Activated CD8-positive, alpha-beta T cell treated with anti-CD3 and anti-CD28 coated beads for 36 hours (primary cell): ENCODE measurements at regions of chr17 and their contacts with region 1.

Region 1: GRCh38 chr17:43673516-43674323 is 12.0 kb upstream of the MEOX1 start:
- DNase-seq: peak; percentile 88
- ATAC-seq: peak; percentile 75
- H3K4me3 Mint-ChIP-seq: no peak overlapping the region
- H3K27ac Mint-ChIP-seq: no peak overlapping the region
- H3K4me1 Mint-ChIP-seq: peaks cover 11% of the 10 kb centered on the region
- H3K27me3 Mint-ChIP-seq: peaks cover 3% of the 10 kb centered on the region
- CTCF ChIP-seq: peak; percentile 97

Region 2: GRCh38 chr17:43309505-43310332 is 364.0 kb before region 1 on chr17:
- CTCF ChIA-PET with region 1: no interaction called
- POLR2A ChIA-PET with region 1: no interaction called
- intact Hi-C with region 1: no loop called
- DNase-seq: no peak
- ATAC-seq: no peak
- H3K4me3 Mint-ChIP-seq: no peak overlapping the region
- H3K27ac Mint-ChIP-seq: no peak overlapping the region
- H3K4me1 Mint-ChIP-seq: peaks cover 9% of the 10 kb centered on the region
- H3K27me3 Mint-ChIP-seq: no peaks in the 10 kb centered on the region
- CTCF ChIP-seq: no peak

Region 3: GRCh38 chr17:43584666-43585102 is 89.0 kb before region 1 on chr17:
- CTCF ChIA-PET with region 1: interaction called, 13 read pairs
- POLR2A ChIA-PET with region 1: interaction called, 3 read pairs
- intact Hi-C with region 1: no loop called
- DNase-seq: no peak
- ATAC-seq: no peak
- H3K4me3 Mint-ChIP-seq: no peak overlapping the region
- H3K27ac Mint-ChIP-seq: no peak overlapping the region
- H3K4me1 Mint-ChIP-seq: no peaks in the 10 kb centered on the region
- H3K27me3 Mint-ChIP-seq: peaks cover 2% of the 10 kb centered on the region
- CTCF ChIP-seq: no peak

Region 4: DNA sequence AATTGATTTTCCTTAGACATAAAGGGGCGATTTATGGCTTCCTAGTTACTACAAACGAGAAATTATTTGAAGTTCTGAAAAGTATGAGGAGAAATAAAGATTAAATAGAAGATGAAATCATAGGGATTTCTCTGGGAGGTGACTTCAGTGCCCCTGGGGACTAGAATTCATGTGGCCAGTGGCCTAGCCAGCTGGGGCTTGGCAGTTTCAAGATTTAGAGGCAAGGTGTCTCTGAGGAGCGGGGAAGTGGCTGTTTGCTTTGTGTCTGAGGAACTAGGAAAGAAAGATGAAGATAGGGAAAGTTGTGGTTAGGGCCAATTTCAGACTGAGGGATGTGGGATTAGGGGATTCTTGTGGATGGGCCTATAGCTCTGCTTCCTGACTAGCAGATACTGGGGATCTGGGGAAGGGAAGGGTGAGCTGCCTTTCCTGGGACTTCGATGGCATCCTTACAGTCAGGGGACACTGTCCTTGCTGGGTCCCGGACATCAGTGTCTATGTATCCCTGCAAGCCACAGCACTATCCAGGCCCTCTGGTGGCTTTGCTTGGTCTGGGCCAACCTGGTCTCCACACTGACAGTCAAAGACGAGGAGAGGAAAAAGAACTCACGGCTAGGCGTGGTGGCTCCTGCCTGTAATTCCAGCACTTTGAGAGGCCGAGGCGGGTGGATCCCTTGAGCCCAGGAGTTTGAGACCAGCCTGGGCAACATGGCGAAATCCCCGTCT is 10.4 kb after region 1 on chr17:
- CTCF ChIA-PET with region 1: interaction called, 14 read pairs
- POLR2A ChIA-PET with region 1: interaction called, 4 read pairs
- intact Hi-C with region 1: no loop called
- DNase-seq: no peak
- ATAC-seq: no peak
- H3K4me3 Mint-ChIP-seq: no peak overlapping the region
- H3K27ac Mint-ChIP-seq: no peak overlapping the region
- H3K4me1 Mint-ChIP-seq: no peaks in the 10 kb centered on the region
- H3K27me3 Mint-ChIP-seq: no peaks in the 10 kb centered on the region
- CTCF ChIP-seq: no peak